Lower lobe of right lung (tissue), 2 donors: ENCODE measurements at regions of chr1 and their contacts with region 1.

Region 1: GRCh38 chr1:74771913-74772515 is 39.1 kb downstream of the TYW3 start:
- DNase-seq: no peak
- ATAC-seq: no peak
- H3K4me3 ChIP-seq: no peak overlapping the region
- H3K27ac ChIP-seq: no peak overlapping the region
- H3K4me1 ChIP-seq: no peaks in the 10 kb centered on the region
- H3K27me3 ChIP-seq: no peaks in the 10 kb centered on the region
- CTCF ChIP-seq: peak; percentile 71

Region 2: GRCh38 chr1:74673351-74674111 is 98.5 kb before region 1 on chr1 and contains the start of gene ERICH3:
- intact Hi-C with region 1: no loop called
- DNase-seq: peak; percentile 42
- ATAC-seq: peak in 1 of 2 donors; percentile 21
- H3K4me3 ChIP-seq: peak within 1 kb of the TSS; percentile 36
- H3K27ac ChIP-seq: no peak within 1 kb of the TSS
- H3K4me1 ChIP-seq: peaks cover 7% of the 10 kb centered on the region
- H3K27me3 ChIP-seq: peaks cover 16% of the 10 kb centered on the region
- CTCF ChIP-seq: no peak
- total RNA-seq, gene ERICH3: 8.1 TPM

Region 3: GRCh38 chr1:75208862-75209261 is 436.8 kb after region 1 on chr1:
- intact Hi-C with region 1: loop called (anchors 5 kb)
- DNase-seq: no peak
- ATAC-seq: no peak
- H3K4me3 ChIP-seq: no peak overlapping the region
- H3K27ac ChIP-seq: no peak overlapping the region
- H3K4me1 ChIP-seq: no peaks in the 10 kb centered on the region
- H3K27me3 ChIP-seq: no peaks in the 10 kb centered on the region
- CTCF ChIP-seq: no peak